Activated naive CD4-positive, alpha-beta T cell treated with anti-CD3 and anti-CD28 coated beads for 36 hours (primary cell): ENCODE measurements at regions of chr2 and their contacts with region 1.

Region 1: GRCh38 chr2:195318440-195319111 is 338.4 kb upstream of the SLC39A10 start:
- DNase-seq: peak; percentile 69
- H3K4me3 Mint-ChIP-seq: no peak overlapping the region
- H3K27ac Mint-ChIP-seq: no peak overlapping the region
- H3K4me1 Mint-ChIP-seq: peaks cover 10% of the 10 kb centered on the region
- H3K27me3 Mint-ChIP-seq: no peaks in the 10 kb centered on the region

Region 2: GRCh38 chr2:193695367-193695766 is 1623.2 kb before region 1 on chr2:
- CTCF ChIA-PET with region 1: no interaction called
- intact Hi-C with region 1: loop called (anchors 10 kb)
- DNase-seq: peak; percentile 4
- H3K4me3 Mint-ChIP-seq: no peak overlapping the region
- H3K27ac Mint-ChIP-seq: no peak overlapping the region
- H3K4me1 Mint-ChIP-seq: no peaks in the 10 kb centered on the region
- H3K27me3 Mint-ChIP-seq: no peaks in the 10 kb centered on the region

Region 3: DNA sequence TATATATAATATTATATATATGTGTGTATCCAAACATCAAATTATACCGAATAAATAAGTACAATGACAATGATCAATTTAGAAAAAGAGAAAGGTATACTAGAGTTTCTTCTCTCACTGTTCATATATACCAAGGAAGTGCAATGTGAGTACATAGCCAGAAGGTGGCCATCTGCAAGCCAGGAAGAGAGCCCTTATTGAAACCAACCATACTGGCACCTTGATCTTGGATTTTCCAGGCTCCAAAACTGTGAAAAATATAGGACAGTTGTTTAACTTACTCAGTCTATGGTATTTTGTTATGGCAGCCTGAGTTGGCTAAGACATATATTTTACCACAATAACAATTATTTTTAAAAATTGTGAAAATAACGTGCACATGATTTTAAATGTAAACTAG is 1151.8 kb before region 1 on chr2:
- CTCF ChIA-PET with region 1: interaction called, 5 read pairs
- intact Hi-C with region 1: loop called (anchors 1 kb)
- DNase-seq: peak; percentile 33
- H3K4me3 Mint-ChIP-seq: no peak overlapping the region
- H3K27ac Mint-ChIP-seq: no peak overlapping the region
- H3K4me1 Mint-ChIP-seq: no peaks in the 10 kb centered on the region
- H3K27me3 Mint-ChIP-seq: peaks cover 5% of the 10 kb centered on the region

Region 4: DNA sequence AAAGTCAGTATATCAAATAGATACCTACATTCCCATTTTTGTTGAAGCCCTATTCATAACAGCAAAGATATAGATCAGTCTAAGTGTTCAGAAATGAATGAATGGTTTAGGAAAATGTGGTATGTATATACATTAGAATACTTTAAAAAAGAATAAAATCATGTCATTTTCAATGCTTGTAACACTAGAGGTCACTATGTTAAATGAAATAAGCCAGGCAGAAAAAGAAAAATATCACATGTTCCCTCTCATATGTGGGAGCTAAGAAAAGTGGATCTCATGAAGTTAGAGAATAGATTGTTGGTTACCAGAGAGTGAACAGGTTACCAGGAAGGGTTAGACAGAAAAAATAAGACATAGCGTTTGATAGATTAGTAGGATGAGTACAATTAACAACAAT is 772.6 kb before region 1 on chr2:
- CTCF ChIA-PET with region 1: no interaction called
- intact Hi-C with region 1: loop called (anchors 1 kb)
- DNase-seq: no peak
- H3K4me3 Mint-ChIP-seq: no peak overlapping the region
- H3K27ac Mint-ChIP-seq: no peak overlapping the region
- H3K4me1 Mint-ChIP-seq: no peaks in the 10 kb centered on the region
- H3K27me3 Mint-ChIP-seq: peaks cover 7% of the 10 kb centered on the region

Region 5: GRCh38 chr2:194867328-194867727 is 451.2 kb before region 1 on chr2:
- CTCF ChIA-PET with region 1: no interaction called
- intact Hi-C with region 1: loop called (anchors 2 kb)
- DNase-seq: no peak
- H3K4me3 Mint-ChIP-seq: no peak overlapping the region
- H3K27ac Mint-ChIP-seq: no peak overlapping the region
- H3K4me1 Mint-ChIP-seq: no peaks in the 10 kb centered on the region
- H3K27me3 Mint-ChIP-seq: no peaks in the 10 kb centered on the region

Region 6: DNA sequence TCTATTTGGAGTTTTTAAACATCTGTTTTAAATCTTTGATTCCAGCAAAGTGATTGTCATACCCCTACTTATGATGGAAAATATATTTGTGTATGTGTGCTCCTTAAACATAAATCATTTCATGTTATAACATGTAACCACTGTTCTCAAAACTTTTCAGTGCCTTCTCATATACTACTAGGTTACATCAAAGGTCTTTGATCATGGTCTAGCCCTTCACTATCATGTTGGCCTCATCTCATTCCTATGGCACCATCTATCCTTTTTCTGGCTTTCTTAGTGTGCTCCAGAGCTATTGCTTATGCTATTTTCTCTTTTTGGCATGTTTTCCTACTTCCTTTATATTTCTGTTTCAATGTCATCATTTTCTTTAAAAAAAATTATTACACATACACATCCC is 29.5 kb before region 1 on chr2:
- CTCF ChIA-PET with region 1: no interaction called
- intact Hi-C with region 1: no loop called
- DNase-seq: no peak
- H3K4me3 Mint-ChIP-seq: no peak overlapping the region
- H3K27ac Mint-ChIP-seq: no peak overlapping the region
- H3K4me1 Mint-ChIP-seq: no peaks in the 10 kb centered on the region
- H3K27me3 Mint-ChIP-seq: no peaks in the 10 kb centered on the region

Region 7: GRCh38 chr2:195937176-195937575 is 618.6 kb after region 1 on chr2:
- CTCF ChIA-PET with region 1: no interaction called
- intact Hi-C with region 1: loop called (anchors 5 kb)
- DNase-seq: no peak
- H3K4me3 Mint-ChIP-seq: no peak overlapping the region
- H3K27ac Mint-ChIP-seq: no peak overlapping the region
- H3K4me1 Mint-ChIP-seq: no peaks in the 10 kb centered on the region
- H3K27me3 Mint-ChIP-seq: no peaks in the 10 kb centered on the region